ENCODE measurements at regions of chr2 and their contacts with region 1.

Region 1: DNA sequence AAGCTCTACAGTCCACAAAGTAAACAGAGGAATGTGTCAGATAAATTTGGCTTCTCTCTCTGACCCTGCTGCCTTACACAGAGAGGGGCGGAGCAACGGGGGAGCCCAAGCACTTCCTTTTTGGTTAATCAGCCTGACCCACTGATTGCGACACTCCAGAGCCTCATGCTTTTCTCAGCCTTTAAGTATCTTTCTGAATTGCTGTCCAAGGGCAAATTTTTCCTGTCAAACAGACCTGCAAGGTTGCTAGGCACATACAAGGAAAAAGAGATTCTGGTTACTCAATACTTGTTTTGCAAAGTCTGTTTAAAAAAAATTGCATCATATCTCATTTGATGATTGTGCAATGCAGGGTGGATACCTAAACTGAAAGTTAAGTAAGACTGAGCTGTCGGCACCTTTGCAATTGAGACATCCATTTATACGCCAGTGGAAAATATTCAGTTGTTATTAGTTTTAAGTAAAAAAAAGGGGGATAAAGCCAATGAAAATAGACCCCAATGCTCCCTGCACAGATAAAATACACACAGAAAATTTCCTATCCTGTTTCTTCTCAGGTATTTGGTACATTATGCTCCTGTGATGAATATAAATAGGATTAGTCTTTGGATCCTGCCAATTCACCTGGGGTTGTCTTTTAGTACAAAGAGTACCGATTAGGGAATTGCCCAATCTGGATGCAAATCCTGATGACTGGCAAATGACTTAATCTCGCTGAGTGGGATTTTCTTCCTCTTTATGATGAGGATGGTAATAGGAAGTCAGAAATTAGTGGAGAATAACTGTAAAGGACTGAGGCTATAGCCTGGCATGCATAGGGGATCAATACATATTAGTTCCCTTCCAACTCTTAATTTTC is 260.2 kb upstream of the TRIB2 start:
- DNase-seq: peak; percentile 99
- ATAC-seq: peak; percentile 86
- H3K4me3 ChIP-seq: no peak overlapping the region
- H3K27ac ChIP-seq: peak overlapping the region; percentile 50; the same call in 1 of the 2 replicates
- H3K4me1 ChIP-seq: peaks cover 19% of the 10 kb centered on the region
- H3K27me3 ChIP-seq: no peaks in the 10 kb centered on the region
- CTCF ChIP-seq: no peak
- POLR2A ChIP-seq: no peak
- RAD21 ChIP-seq: peak; percentile 24; the same call in 1 of the 2 replicates

Region 2: GRCh38 chr2:11863513-11864328 is 592.8 kb before region 1 on chr2:
- CTCF ChIA-PET with region 1: no interaction called
- POLR2A ChIA-PET with region 1: no interaction called
- dilution Hi-C with region 1: no loop called
- in situ Hi-C with region 1: no loop called
- intact Hi-C with region 1: loop called (anchors 1 kb)
- DNase-seq: peak; percentile 82
- ATAC-seq: peak; percentile 99
- H3K4me3 ChIP-seq: peak overlapping the region; percentile 10; the same call in 1 of the 2 replicates
- H3K27ac ChIP-seq: peak overlapping the region; percentile 66
- H3K4me1 ChIP-seq: peaks cover 2% of the 10 kb centered on the region; the same call in 1 of the 2 replicates
- H3K27me3 ChIP-seq: no peaks in the 10 kb centered on the region; the same call in 1 of the 2 replicates
- CTCF ChIP-seq: peak; percentile 85
- POLR2A ChIP-seq: no peak
- RAD21 ChIP-seq: peak; percentile 93

Region 3: DNA sequence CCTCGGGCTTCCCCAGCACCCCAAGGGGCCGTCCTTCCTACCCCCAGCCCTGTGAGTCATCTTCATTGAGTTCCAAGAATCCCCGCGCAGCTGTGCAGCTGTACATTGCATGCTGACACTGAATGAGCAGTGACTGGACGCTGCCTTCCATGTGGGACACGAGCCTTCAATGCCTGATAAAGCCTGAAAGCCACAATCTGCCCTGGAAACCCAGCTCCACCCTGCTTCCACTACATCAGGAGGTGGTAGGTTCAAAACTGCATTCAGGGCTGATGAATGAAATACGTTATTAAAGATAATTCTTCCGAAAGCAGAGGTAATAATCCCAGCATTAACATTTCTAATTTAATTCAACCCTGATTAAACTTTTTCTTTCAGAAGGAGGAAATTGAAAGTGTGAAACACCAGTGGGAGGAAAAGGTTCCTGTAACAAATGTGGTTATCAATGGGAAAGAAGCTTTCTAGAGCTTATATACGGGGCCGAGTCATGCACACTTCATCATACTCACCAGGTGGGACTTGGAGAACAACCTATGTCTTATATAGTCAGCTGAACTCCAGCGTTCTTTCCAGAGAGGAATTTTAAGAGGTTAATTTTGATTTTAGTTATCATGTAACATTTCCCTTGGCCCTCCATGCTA is 350.0 kb before region 1 on chr2:
- CTCF ChIA-PET with region 1: no interaction called
- POLR2A ChIA-PET with region 1: no interaction called
- dilution Hi-C with region 1: no loop called
- in situ Hi-C with region 1: no loop called
- intact Hi-C with region 1: loop called (anchors 5 kb)
- DNase-seq: peak; percentile 99
- ATAC-seq: peak; percentile 97
- H3K4me3 ChIP-seq: no peak overlapping the region
- H3K27ac ChIP-seq: no peak overlapping the region
- H3K4me1 ChIP-seq: peaks cover 12% of the 10 kb centered on the region
- H3K27me3 ChIP-seq: no peaks in the 10 kb centered on the region
- CTCF ChIP-seq: no peak
- POLR2A ChIP-seq: no peak
- RAD21 ChIP-seq: peak; percentile 42

Region 4: GRCh38 chr2:12176623-12177454 is 279.7 kb before region 1 on chr2:
- CTCF ChIA-PET with region 1: interaction called, 4 read pairs
- POLR2A ChIA-PET with region 1: no interaction called
- dilution Hi-C with region 1: no loop called
- in situ Hi-C with region 1: no loop called
- intact Hi-C with region 1: loop called (anchors 10 kb)
- DNase-seq: peak; percentile 76
- ATAC-seq: peak; percentile 87
- H3K4me3 ChIP-seq: no peak overlapping the region
- H3K27ac ChIP-seq: no peak overlapping the region; the same call in 1 of the 2 replicates
- H3K4me1 ChIP-seq: peaks cover 11% of the 10 kb centered on the region
- H3K27me3 ChIP-seq: no peaks in the 10 kb centered on the region
- CTCF ChIP-seq: no peak
- POLR2A ChIP-seq: no peak
- RAD21 ChIP-seq: no peak

Region 5: DNA sequence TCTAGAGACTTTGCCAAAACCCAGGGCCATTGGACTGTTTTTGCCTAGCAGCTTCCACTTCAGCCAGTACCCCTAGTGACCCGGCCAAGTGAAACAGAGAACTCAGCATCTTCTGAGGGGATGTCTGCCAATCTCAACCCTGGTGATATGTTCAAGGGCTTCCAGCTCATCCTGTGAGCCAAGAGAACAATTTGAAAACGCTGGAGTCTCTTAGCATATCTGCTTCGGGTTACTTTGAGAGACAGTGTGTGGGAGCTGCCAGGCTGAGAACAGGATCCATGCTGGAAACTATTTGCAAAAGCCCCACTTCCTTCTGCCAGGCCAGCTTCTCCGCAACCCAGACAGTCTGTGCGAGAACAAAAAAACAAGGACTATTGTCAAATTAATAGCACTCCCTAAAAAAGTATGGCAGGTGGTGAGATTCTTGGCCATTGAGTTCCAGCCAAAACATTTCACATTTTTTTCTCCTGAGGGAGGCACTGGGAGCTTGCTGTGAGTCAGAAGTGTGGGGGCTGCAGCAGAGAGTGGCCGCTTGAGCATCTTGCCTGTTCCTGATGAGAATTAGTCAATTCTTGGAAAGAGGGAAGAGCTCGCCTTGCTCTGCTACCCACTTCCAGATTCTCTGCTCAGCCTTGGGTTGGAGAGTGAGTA is 135.4 kb before region 1 on chr2:
- CTCF ChIA-PET with region 1: no interaction called
- POLR2A ChIA-PET with region 1: interaction called, 3 read pairs
- dilution Hi-C with region 1: no loop called
- in situ Hi-C with region 1: no loop called
- intact Hi-C with region 1: loop called (anchors 10 kb)
- DNase-seq: peak; percentile 98
- ATAC-seq: peak; percentile 88
- H3K4me3 ChIP-seq: no peak overlapping the region
- H3K27ac ChIP-seq: peak overlapping the region; percentile 12; the same call in 1 of the 2 replicates
- H3K4me1 ChIP-seq: peaks cover 15% of the 10 kb centered on the region
- H3K27me3 ChIP-seq: no peaks in the 10 kb centered on the region
- CTCF ChIP-seq: no peak; the same call in 1 of the 2 replicates
- POLR2A ChIP-seq: no peak
- RAD21 ChIP-seq: peak; percentile 37

Region 6: GRCh38 chr2:12534646-12535263 is 78.2 kb after region 1 on chr2:
- CTCF ChIA-PET with region 1: no interaction called
- POLR2A ChIA-PET with region 1: no interaction called
- dilution Hi-C with region 1: no loop called
- in situ Hi-C with region 1: no loop called
- intact Hi-C with region 1: loop called (anchors 2 kb)
- DNase-seq: peak; percentile 97
- ATAC-seq: peak; percentile 89
- H3K4me3 ChIP-seq: peak overlapping the region; percentile 22; the same call in 1 of the 2 replicates
- H3K27ac ChIP-seq: peak overlapping the region; percentile 87
- H3K4me1 ChIP-seq: peaks cover 3% of the 10 kb centered on the region; the same call in 1 of the 2 replicates
- H3K27me3 ChIP-seq: no peaks in the 10 kb centered on the region
- CTCF ChIP-seq: no peak
- POLR2A ChIP-seq: no peak
- RAD21 ChIP-seq: peak; percentile 34

Region 7: DNA sequence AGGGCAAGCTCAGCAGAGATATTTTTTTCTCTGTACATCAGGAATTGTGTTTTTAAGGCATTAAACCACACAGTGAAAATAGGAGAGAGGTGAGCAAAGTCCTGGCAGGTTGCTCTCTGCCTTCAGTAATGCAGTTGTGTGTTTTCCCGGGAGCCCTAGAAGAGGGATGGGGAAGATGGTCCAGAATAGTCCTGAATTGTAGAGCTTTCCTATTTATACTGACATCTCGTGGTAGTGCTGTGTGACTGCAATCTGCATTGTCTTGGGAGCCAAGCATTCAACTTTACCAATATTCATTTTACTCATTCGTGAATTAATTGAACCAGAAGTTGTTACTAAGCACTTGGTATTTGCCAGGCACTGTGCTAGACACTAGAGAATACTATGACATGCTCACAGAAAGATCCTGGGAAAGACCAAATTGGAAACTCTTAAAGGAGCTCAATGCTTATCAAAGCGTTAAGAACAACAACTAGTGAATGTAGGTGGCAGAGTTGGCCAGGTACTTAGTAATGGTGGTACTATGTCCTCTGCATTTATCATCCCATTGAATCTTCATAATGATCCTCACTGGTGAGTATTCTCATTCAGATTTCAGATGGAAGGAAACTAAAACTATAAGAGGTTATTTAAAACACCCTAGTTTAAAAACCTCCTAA is 474.8 kb after region 1 on chr2:
- CTCF ChIA-PET with region 1: no interaction called
- POLR2A ChIA-PET with region 1: no interaction called
- dilution Hi-C with region 1: no loop called
- in situ Hi-C with region 1: no loop called
- intact Hi-C with region 1: loop called (anchors 5 kb)
- DNase-seq: peak; percentile 63
- ATAC-seq: peak; percentile 93
- H3K4me3 ChIP-seq: no peak overlapping the region
- H3K27ac ChIP-seq: no peak overlapping the region
- H3K4me1 ChIP-seq: peaks cover 10% of the 10 kb centered on the region
- H3K27me3 ChIP-seq: no peaks in the 10 kb centered on the region
- CTCF ChIP-seq: peak; percentile 90
- POLR2A ChIP-seq: 0 out of 2 replicates have a peak, but pooled peaks have one; percentile 29
- RAD21 ChIP-seq: peak; percentile 93